PC-9 (cell line): ENCODE measurements at regions of chr9 and their contacts with region 1.

Region 1: GRCh38 chr9:77291714-77292113 is 114.4 kb downstream of the VPS13A start:
- DNase-seq: peak in 1 of 2 experiments; percentile 2
- H3K4me3 ChIP-seq: no peak overlapping the region
- H3K27ac ChIP-seq: no peak overlapping the region
- H3K4me1 ChIP-seq: no peaks in the 10 kb centered on the region
- H3K27me3 ChIP-seq: no peaks in the 10 kb centered on the region
- CTCF ChIP-seq: no peak; the same call in 1 of the 2 replicates

Region 2: GRCh38 chr9:77731930-77732329 is 440.2 kb after region 1 on chr9:
- CTCF ChIA-PET with region 1: interaction called, 11 read pairs
- POLR2A ChIA-PET with region 1: no interaction called
- intact Hi-C with region 1: no loop called
- DNase-seq: no peak
- H3K4me3 ChIP-seq: no peak overlapping the region
- H3K27ac ChIP-seq: no peak overlapping the region
- H3K4me1 ChIP-seq: no peaks in the 10 kb centered on the region
- H3K27me3 ChIP-seq: no peaks in the 10 kb centered on the region
- CTCF ChIP-seq: no peak